Activated CD4-positive, alpha-beta memory T cell treated with anti-CD3 and anti-CD28 coated beads, Interleukin-2, amount 10 ng/mL, durations not matched to agents 7 days and 5 days (primary cell): ENCODE measurements at regions of chr16 and their contacts with region 1.

Region 1: GRCh38 chr16:66608241-66609138 is 4.0 kb downstream of the CMTM3 start:
- DNase-seq: peak; percentile 82
- H3K4me3 Mint-ChIP-seq: peak overlapping the region; percentile 17
- H3K27ac Mint-ChIP-seq: peak overlapping the region; percentile 75
- H3K4me1 Mint-ChIP-seq: peaks cover 44% of the 10 kb centered on the region
- H3K27me3 Mint-ChIP-seq: no peaks in the 10 kb centered on the region

Region 2: GRCh38 chr16:66406534-66407221 is 201.8 kb before region 1 on chr16:
- CTCF ChIA-PET with region 1: interaction called, 15 read pairs
- POLR2A ChIA-PET with region 1: interaction called, 5 read pairs
- DNase-seq: peak; percentile 90
- H3K4me3 Mint-ChIP-seq: peak overlapping the region; percentile 77
- H3K27ac Mint-ChIP-seq: peak overlapping the region; percentile 38
- H3K4me1 Mint-ChIP-seq: peaks cover 31% of the 10 kb centered on the region
- H3K27me3 Mint-ChIP-seq: peaks cover 17% of the 10 kb centered on the region

Region 3: GRCh38 chr16:66490774-66491715 is 117.4 kb before region 1 on chr16:
- CTCF ChIA-PET with region 1: no interaction called
- POLR2A ChIA-PET with region 1: no interaction called
- DNase-seq: no peak
- H3K4me3 Mint-ChIP-seq: no peak overlapping the region
- H3K27ac Mint-ChIP-seq: no peak overlapping the region
- H3K4me1 Mint-ChIP-seq: no peaks in the 10 kb centered on the region
- H3K27me3 Mint-ChIP-seq: no peaks in the 10 kb centered on the region

Region 4: DNA sequence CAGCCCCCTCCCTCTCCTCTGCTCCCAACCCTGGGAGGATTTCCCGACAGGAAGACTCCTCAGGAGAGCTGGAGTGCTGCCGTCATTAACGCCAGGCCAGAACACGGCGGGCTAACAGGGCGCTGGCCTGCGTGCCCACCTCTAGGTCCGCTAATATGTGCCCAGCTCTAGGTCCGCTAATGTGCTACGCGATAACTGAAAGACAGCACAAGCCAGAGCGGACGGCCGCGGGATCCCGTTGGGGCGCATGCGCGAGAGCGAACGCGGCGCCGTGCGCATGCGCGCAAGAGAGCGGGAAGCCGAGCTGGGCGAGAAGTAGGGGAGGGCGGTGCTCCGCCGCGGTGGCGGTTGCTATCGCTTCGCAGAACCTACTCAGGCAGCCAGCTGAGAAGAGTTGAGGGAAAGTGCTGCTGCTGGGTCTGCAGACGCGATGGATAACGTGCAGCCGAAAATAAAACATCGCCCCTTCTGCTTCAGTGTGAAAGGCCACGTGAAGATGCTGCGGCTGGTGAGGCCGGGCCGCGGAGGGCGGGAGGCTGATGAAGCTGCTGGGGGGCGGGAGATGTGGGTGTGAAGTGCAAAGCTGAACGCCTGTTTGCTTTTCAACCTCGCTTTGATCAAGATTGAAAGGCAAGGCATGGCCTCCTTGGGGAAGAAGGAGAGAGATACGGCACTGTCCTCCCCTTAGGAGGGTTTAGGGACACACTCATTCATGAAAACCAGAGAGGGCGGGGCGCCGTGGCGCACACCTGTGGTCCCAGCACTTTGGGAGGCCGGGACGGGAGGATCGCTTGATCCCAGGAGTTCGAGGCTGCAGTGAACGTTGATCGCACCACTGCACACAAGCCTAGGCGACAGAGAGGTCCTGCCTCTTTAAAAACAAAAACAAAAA is 56.0 kb before region 1 on chr16 and contains the start of gene CKLF:
- CTCF ChIA-PET with region 1: interaction called, 14 read pairs
- POLR2A ChIA-PET with region 1: interaction called, 40 read pairs
- DNase-seq: peak; percentile 94
- H3K4me3 Mint-ChIP-seq: peak within 1 kb of the TSS; percentile 98
- H3K27ac Mint-ChIP-seq: peak within 1 kb of the TSS; percentile 91
- H3K4me1 Mint-ChIP-seq: peaks cover 77% of the 10 kb centered on the region
- H3K27me3 Mint-ChIP-seq: no peaks in the 10 kb centered on the region
- total RNA-seq, gene CKLF: 183 to 188 TPM

Region 5: DNA sequence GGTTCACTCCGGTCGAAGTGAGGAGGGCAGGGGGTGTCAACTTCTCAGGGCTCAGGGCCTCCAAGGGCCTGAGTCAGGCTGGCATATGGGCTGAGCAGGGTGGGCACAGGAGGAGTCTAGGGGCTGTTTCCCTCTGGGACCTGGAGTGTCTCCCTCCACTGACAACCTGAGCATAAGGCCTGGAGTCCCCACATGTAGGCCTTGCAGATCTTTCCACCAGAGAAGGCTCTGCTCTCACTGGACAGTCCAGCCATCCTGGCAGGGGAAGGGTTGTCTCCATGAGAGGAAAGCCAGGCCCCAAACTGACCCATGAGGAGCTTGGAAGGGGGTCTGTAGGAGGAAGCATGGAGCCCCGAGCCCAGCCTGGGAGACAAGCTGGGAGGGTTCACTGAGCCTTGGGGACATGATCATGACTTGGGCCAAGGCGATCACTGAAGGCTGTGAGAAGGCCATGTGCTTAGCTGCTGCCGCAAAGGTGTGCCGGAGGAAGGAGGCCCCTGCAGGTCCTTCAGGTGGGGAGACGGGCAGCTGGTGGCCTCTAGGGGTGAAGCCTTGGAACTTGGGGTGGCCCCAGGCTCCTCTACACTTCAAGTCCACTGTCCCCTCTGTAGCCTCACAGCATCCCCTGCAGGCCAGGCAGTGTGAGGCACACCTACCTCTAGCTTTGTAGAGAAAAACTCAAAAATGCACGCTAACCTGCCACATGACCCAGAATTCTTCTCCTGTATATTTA is 19.3 kb before region 1 on chr16:
- CTCF ChIA-PET with region 1: interaction called, 27 read pairs
- POLR2A ChIA-PET with region 1: interaction called, 36 read pairs
- DNase-seq: peak; percentile 81
- H3K4me3 Mint-ChIP-seq: peak overlapping the region; percentile 67
- H3K27ac Mint-ChIP-seq: peak overlapping the region; percentile 47
- H3K4me1 Mint-ChIP-seq: peaks cover 26% of the 10 kb centered on the region
- H3K27me3 Mint-ChIP-seq: peaks cover 2% of the 10 kb centered on the region

Region 6: GRCh38 chr16:66618588-66619375 is 10.3 kb after region 1 on chr16:
- CTCF ChIA-PET with region 1: interaction called, 24 read pairs
- POLR2A ChIA-PET with region 1: interaction called, 4 read pairs
- DNase-seq: no peak
- H3K4me3 Mint-ChIP-seq: no peak overlapping the region
- H3K27ac Mint-ChIP-seq: no peak overlapping the region
- H3K4me1 Mint-ChIP-seq: peaks cover 6% of the 10 kb centered on the region
- H3K27me3 Mint-ChIP-seq: no peaks in the 10 kb centered on the region

Region 7: GRCh38 chr16:66717112-66717675 is 108.7 kb after region 1 on chr16:
- CTCF ChIA-PET with region 1: no interaction called
- POLR2A ChIA-PET with region 1: no interaction called
- DNase-seq: peak; percentile 24
- H3K4me3 Mint-ChIP-seq: no peak overlapping the region
- H3K27ac Mint-ChIP-seq: no peak overlapping the region
- H3K4me1 Mint-ChIP-seq: no peaks in the 10 kb centered on the region
- H3K27me3 Mint-ChIP-seq: no peaks in the 10 kb centered on the region